GM12878 (cell line): ENCODE measurements at regions of chr2 and their contacts with region 1.

Region 1: DNA sequence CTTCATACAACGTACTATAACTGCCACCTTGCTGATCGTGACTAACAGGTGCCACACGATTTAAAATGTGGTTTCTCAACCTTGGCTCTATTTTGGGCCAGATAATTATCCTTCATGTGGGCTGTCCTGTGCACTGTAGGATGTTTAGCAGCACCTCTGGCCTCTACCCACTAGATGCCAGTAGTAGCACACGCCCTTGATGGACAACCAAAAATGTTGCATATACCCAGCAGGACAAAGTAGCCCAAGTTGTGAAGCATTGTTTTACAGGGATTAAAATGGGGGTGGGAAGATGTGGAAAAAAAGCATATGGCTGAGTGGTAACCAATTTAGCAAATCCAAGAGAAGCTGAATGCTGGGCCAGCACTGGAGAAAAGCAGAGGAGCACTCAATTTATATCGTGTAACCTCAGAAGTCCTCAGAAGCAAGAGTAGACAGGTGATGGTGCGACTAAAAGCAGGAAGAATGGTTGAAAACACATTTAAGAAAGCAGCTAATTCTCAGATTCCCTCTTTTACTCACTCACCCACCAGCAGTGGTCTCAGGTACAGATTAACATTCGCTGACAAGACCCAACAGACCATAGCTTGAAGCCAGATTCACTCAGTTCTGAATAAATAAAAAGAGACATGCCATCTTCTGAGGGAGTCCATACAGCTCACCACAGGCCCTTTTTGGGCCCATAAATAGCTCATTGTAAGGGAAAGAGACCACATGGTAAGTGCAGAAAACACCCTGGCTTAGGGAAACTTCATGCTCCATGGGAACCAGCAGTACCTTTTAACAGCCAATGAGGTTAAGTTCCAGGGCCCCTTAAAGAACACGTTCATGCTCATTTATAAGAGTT is 50.6 kb downstream of the RAPH1 start:
- DNase-seq: peak; percentile 40
- ATAC-seq: peak; percentile 93
- H3K4me3 ChIP-seq: no peak overlapping the region
- H3K27ac ChIP-seq: no peak overlapping the region
- H3K4me1 ChIP-seq: no peaks in the 10 kb centered on the region
- H3K27me3 ChIP-seq: no peaks in the 10 kb centered on the region; a peak in 1 of 4 replicates
- CTCF ChIP-seq: peak; percentile 73 to 78 (median 77)
- EP300 ChIP-seq: no peak
- POLR2A ChIP-seq: no peak
- RAD21 ChIP-seq: peak; percentile 95

Region 2: GRCh38 chr2:203135105-203135504 is 349.4 kb before region 1 on chr2:
- CTCF ChIA-PET with region 1: no interaction called
- POLR2A ChIA-PET with region 1: no interaction called
- RAD21 ChIA-PET with region 1: no interaction called
- SMC1A ChIA-PET with region 1: no interaction called
- in situ Hi-C with region 1: no loop called
- intact Hi-C with region 1: no loop called
- DNase-seq: no peak
- ATAC-seq: no peak
- H3K4me3 ChIP-seq: no peak overlapping the region
- H3K27ac ChIP-seq: no peak overlapping the region
- H3K4me1 ChIP-seq: no peaks in the 10 kb centered on the region
- H3K27me3 ChIP-seq: no peaks in the 10 kb centered on the region
- CTCF ChIP-seq: no peak
- EP300 ChIP-seq: no peak
- POLR2A ChIP-seq: no peak
- RAD21 ChIP-seq: no peak

Region 3: GRCh38 chr2:203650860-203651613 is 166.5 kb after region 1 on chr2:
- CTCF ChIA-PET with region 1: interaction called, 5 read pairs
- POLR2A ChIA-PET with region 1: no interaction called
- RAD21 ChIA-PET with region 1: no interaction called
- SMC1A ChIA-PET with region 1: interaction called, 3 read pairs
- in situ Hi-C with region 1: no loop called
- intact Hi-C with region 1: loop called (anchors 1 kb)
- DNase-seq: no peak
- ATAC-seq: peak; percentile 72
- H3K4me3 ChIP-seq: no peak overlapping the region
- H3K27ac ChIP-seq: no peak overlapping the region
- H3K4me1 ChIP-seq: no peaks in the 10 kb centered on the region
- H3K27me3 ChIP-seq: peaks cover 0 to 4% of the 10 kb centered on the region in 2 experiments; a peak in 1 of 4 replicates
- CTCF ChIP-seq: peak; percentile 8 to 34 (median 33); a peak in 2 of 6 replicates
- EP300 ChIP-seq: no peak
- POLR2A ChIP-seq: no peak
- RAD21 ChIP-seq: peak; percentile 60

Region 4: DNA sequence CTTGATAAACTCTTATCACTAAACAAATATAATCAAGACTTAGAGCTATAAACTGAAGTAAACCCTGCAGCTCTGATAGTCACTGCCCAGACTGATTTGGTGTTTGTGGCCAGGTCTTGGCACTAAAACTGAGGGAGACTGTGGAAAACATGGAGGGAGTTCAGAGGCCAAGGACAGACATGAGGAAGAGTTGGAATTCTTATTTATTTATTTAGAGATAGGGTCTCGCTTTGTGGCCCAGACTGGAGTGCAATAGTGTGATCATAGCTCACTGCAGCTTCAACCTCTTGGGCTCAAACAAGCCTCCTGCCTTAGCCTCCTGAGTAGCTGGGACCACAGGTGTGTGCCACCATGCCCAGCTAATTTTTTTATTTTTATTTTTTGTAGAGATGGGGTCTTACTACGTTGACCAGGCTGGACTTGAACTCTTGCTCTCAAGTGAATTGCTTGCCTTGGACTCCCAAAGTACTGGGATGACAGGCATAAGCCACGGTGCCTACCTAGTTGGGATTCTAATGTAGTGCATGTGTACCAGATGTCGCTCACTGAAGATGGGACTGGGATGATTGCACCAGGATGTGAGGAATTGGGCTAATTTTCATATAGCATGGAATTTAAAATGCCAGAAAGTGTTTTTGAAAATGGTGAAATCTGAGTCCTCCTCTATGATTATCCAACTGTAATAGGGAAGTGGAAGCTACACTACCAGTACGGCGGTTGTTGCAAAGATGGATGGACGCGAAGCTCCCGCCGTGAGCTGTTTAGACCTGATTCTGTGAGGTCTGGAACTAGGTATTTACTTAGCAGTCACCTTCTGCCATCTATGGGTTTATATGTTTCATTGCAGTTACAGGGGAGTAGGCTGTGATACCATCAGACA is 330.4 kb after region 1 on chr2:
- CTCF ChIA-PET with region 1: interaction called, 23 read pairs
- POLR2A ChIA-PET with region 1: no interaction called
- RAD21 ChIA-PET with region 1: interaction called, 12 read pairs
- SMC1A ChIA-PET with region 1: interaction called, 16 read pairs
- in situ Hi-C with region 1: loop called (anchors 5 kb)
- intact Hi-C with region 1: loop called (anchors 1 kb)
- DNase-seq: no peak
- ATAC-seq: peak; percentile 91
- H3K4me3 ChIP-seq: no peak overlapping the region
- H3K27ac ChIP-seq: no peak overlapping the region
- H3K4me1 ChIP-seq: peaks cover 6% of the 10 kb centered on the region
- H3K27me3 ChIP-seq: peaks cover 0 to under 1% of the 10 kb centered on the region in 2 experiments; a peak in 1 of 4 replicates
- CTCF ChIP-seq: peak; percentile 55 to 80 (median 66); a peak in 5 of 6 replicates
- EP300 ChIP-seq: no peak
- POLR2A ChIP-seq: no peak
- RAD21 ChIP-seq: peak; percentile 89

Region 5: GRCh38 chr2:203909261-203909967 is 424.9 kb after region 1 on chr2:
- CTCF ChIA-PET with region 1: interaction called, 3 read pairs
- POLR2A ChIA-PET with region 1: no interaction called
- RAD21 ChIA-PET with region 1: no interaction called
- SMC1A ChIA-PET with region 1: interaction called, 3 read pairs
- in situ Hi-C with region 1: no loop called
- intact Hi-C with region 1: loop called (anchors 5 kb)
- DNase-seq: no peak
- ATAC-seq: peak; percentile 40; the same call in 1 of the 3 replicates
- H3K4me3 ChIP-seq: no peak overlapping the region
- H3K27ac ChIP-seq: no peak overlapping the region
- H3K4me1 ChIP-seq: peaks cover 4% of the 10 kb centered on the region; the same call in 1 of the 2 replicates
- H3K27me3 ChIP-seq: 0 out of 4 replicates have a peak, but pooled peaks cover 0 to 5% of the 10 kb centered on the region in 2 experiments
- CTCF ChIP-seq: peak; percentile 38 to 40 (median 39); a peak in 4 of 6 replicates
- EP300 ChIP-seq: no peak
- POLR2A ChIP-seq: no peak
- RAD21 ChIP-seq: peak; percentile 67